GM23248 (cell line): ENCODE measurements at regions of chr4 and their contacts with region 1.

Region 1: DNA sequence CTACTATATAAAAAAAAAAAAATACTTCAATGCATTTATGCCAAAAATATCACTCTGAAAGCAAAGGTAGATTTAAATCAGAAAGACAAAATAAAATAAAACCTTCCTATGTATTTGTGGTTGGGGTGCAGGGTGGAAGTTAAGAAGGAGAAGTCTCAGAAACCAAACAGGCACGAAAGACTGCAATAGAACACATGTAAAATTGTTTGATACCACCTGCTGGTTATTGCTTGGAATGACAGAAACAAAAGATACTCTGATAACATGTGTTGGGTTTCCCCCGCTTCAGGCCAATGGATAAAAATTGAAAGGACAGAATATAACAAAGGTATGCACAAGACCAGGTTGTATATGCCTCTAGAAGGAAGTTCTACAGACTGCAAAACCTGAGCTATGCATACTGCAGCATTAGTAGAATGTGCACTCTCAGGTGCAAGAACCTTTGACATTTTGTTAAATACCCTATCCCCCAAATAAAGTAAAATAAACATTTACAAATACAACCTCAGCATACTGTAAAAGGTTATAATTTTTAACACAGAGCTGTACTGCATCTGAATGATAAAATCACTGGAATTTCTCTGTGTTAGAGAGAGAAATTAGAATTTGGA is 118.8 kb downstream of the GABRA2 start:
- DNase-seq: peak; percentile 55
- H3K4me3 ChIP-seq: no peak overlapping the region
- H3K27ac ChIP-seq: no peak overlapping the region
- H3K4me1 ChIP-seq: no peaks in the 10 kb centered on the region
- H3K27me3 ChIP-seq: no peaks in the 10 kb centered on the region

Region 2: DNA sequence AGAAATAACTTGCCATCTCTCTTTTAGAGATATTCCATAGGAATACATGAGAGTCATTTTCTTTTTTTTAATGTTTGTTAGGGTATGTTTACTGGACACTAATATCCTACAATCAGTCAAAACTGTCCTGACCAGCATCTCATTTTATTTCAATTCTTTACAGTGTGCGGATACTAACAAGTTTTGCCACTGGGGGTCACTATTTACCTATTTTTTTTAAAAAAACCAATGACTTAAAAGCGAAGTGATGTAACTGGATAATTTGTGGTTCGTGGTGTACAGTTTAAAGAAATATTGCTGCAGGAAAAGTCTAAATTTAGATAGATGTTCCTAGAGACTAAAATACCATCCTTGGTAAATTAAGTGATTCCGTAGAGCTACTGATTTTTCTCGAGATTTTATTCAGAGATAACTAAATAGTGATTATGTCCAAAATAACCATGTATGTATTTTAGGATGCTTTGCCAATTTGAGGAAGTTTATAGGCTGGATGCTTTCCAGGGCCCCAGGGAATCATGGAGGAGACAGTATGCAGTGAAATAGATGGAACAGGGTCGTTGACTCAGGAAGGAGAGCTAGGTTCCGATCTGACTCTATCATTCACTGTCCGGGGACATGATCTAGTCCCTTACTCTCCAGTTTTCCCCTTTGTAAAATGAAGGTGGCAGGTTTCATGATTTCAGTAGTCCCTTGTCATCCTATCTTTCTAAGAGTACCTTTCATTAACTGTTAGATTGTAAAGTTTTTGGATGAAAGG is 1510.8 kb before region 1 on chr4:
- in situ Hi-C with region 1: loop called (anchors 25 kb)
- DNase-seq: peak; percentile 62
- H3K4me3 ChIP-seq: no peak overlapping the region; the same call in 1 of the 2 replicates
- H3K27ac ChIP-seq: no peak overlapping the region
- H3K4me1 ChIP-seq: peaks cover 4% of the 10 kb centered on the region; the same call in 1 of the 2 replicates
- H3K27me3 ChIP-seq: no peaks in the 10 kb centered on the region